ENCODE measurements at regions of chr9 and their contacts with region 1.

Region 1: GRCh38 chr9:126347911-126348760 is 21.5 kb downstream of the MVB12B start:
- H3K4me3 Mint-ChIP-seq: peak overlapping the region; percentile 60
- H3K27ac Mint-ChIP-seq: peak overlapping the region; percentile 91
- H3K4me1 Mint-ChIP-seq: peaks cover 77% of the 10 kb centered on the region
- H3K27me3 Mint-ChIP-seq: no peaks in the 10 kb centered on the region

Region 2: GRCh38 chr9:126326228-126327005 is 21.7 kb before region 1 on chr9 and contains the start of gene MVB12B:
- intact Hi-C with region 1: loop called (anchors 2 kb)
- H3K4me3 Mint-ChIP-seq: peak within 1 kb of the TSS; percentile 82
- H3K27ac Mint-ChIP-seq: peak within 1 kb of the TSS; percentile 88
- H3K4me1 Mint-ChIP-seq: peaks cover 52% of the 10 kb centered on the region
- H3K27me3 Mint-ChIP-seq: no peaks in the 10 kb centered on the region

Region 3: GRCh38 chr9:126379661-126380360 is 31.7 kb after region 1 on chr9:
- intact Hi-C with region 1: loop called (anchors 5 kb)
- H3K4me3 Mint-ChIP-seq: no peak overlapping the region
- H3K27ac Mint-ChIP-seq: peak overlapping the region; percentile 73
- H3K4me1 Mint-ChIP-seq: peaks cover 83% of the 10 kb centered on the region
- H3K27me3 Mint-ChIP-seq: no peaks in the 10 kb centered on the region

Region 4: GRCh38 chr9:126389992-126390391 is 41.9 kb after region 1 on chr9:
- intact Hi-C with region 1: loop called (anchors 2 kb)
- H3K4me3 Mint-ChIP-seq: peak overlapping the region; percentile 17
- H3K27ac Mint-ChIP-seq: peak overlapping the region; percentile 96
- H3K4me1 Mint-ChIP-seq: peaks cover 85% of the 10 kb centered on the region
- H3K27me3 Mint-ChIP-seq: no peaks in the 10 kb centered on the region

Measured in dendritic cell treated with granulocyte-macrophage colony-stimulating factor and Interleukin-4, amounts not matched to agents 40 ng/mL and 50 ng/mL, for 4 days (primary cell).